Spleen (tissue), 13 donors: ENCODE measurements at regions of chr17 and their contacts with region 1.

Region 1: DNA sequence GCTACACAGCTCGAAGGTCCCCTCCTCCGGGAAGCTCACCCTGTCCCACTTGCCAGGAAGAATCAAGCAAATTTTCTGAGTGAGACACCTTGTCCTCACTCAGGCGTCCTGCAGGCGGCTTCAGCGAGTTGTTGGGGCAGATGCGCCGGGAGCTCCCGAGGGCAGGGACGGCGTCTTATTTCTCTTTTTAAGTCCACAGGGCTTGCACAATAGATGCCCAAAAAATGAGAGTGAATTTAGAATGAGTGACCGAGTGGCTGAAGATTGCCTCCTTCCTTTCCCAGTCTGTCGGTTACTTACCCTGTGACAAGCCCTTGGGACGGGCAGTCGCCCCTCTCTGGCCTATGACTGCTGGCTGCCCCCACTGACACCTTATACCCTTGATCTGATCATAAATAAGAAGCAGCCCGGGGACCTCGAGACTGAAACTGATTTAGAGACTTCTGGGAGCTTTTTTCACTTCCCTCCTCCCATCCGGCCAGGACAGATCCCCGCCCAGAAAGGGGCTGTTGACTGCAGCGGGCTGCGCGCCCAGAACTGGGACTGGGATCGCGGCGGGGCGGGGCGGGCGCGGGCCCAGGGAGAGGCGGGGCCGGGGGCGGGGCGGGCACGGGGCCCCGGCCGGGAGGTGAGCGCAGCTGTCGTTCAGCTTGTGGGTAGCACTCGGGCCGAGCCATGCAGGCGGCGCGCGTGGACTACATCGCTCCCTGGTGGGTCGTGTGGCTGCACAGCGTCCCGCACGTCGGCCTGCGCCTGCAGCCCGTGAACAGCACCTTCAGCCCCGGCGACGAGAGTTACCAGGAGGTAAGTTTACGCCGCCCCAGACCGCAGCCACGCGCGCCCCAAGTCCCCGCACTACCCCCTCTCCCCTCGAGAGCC is at the start of gene TTYH2:
- DNase-seq: peak; percentile 94
- H3K4me3 ChIP-seq: peak within 1 kb of the TSS; percentile 44 to 75 (median 56)
- H3K27ac ChIP-seq: peak within 1 kb of the TSS; percentile 63 to 86 (median 79)
- H3K4me1 ChIP-seq: peaks cover 27 to 92% (median 74%) of the 10 kb centered on the region in 6 donors
- H3K27me3 ChIP-seq: no peaks in the 10 kb centered on the region
- CTCF ChIP-seq: peak in 6 of 11 experiments; percentile 12 to 27 (median 22)
- POLR2A ChIP-seq: no peak
- total RNA-seq, gene TTYH2: 15.0 to 22.7 (median 21.0) TPM

Region 2: GRCh38 chr17:74274060-74274708 is 61.0 kb after region 1 on chr17 and contains the start of gene DNAI2:
- intact Hi-C with region 1: no loop called
- DNase-seq: peak; percentile 82
- H3K4me3 ChIP-seq: peak within 1 kb of the TSS in 2 of 8 donors; percentile 10 to 50
- H3K27ac ChIP-seq: no peak within 1 kb of the TSS
- H3K4me1 ChIP-seq: peaks cover 13 to 35% (median 19%) of the 10 kb centered on the region in 6 donors
- H3K27me3 ChIP-seq: peaks cover 0 to 50% (median 0%) of the 10 kb centered on the region in 7 donors
- CTCF ChIP-seq: no peak
- POLR2A ChIP-seq: no peak
- total RNA-seq, gene DNAI2: 0.23 to 0.67 (median 0.29) TPM in 3 of 7 donors, not detected in the others

Region 3: DNA sequence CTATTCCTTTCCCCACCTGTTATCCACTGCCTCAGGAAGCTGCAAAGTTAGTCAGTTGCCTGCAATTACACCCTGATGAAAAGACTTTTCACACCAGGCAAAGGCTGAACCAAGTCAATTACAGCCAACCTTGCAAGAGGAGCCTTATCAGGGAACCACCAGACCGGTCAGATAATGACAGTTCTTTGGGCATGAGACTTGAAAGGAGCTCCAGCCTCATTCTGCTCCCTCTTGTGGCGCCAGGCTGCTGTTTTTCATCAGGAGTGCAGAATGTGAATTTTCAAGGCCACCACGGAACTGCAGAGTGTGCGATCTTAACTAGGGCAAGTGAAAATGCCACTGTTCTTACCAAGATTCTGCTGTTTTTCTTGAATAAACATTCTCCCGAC is 83.4 kb after region 1 on chr17:
- intact Hi-C with region 1: loop called (anchors 5 kb)
- DNase-seq: no peak
- H3K4me3 ChIP-seq: no peak overlapping the region
- H3K27ac ChIP-seq: peak overlapping the region in 1 of 8 donors; percentile 40
- H3K4me1 ChIP-seq: peaks cover 5 to 30% (median 8%) of the 10 kb centered on the region in 6 donors
- H3K27me3 ChIP-seq: peaks cover 0 to 34% (median 0%) of the 10 kb centered on the region in 7 donors
- CTCF ChIP-seq: peak; percentile 32 to 74 (median 60)
- POLR2A ChIP-seq: no peak

Region 4: DNA sequence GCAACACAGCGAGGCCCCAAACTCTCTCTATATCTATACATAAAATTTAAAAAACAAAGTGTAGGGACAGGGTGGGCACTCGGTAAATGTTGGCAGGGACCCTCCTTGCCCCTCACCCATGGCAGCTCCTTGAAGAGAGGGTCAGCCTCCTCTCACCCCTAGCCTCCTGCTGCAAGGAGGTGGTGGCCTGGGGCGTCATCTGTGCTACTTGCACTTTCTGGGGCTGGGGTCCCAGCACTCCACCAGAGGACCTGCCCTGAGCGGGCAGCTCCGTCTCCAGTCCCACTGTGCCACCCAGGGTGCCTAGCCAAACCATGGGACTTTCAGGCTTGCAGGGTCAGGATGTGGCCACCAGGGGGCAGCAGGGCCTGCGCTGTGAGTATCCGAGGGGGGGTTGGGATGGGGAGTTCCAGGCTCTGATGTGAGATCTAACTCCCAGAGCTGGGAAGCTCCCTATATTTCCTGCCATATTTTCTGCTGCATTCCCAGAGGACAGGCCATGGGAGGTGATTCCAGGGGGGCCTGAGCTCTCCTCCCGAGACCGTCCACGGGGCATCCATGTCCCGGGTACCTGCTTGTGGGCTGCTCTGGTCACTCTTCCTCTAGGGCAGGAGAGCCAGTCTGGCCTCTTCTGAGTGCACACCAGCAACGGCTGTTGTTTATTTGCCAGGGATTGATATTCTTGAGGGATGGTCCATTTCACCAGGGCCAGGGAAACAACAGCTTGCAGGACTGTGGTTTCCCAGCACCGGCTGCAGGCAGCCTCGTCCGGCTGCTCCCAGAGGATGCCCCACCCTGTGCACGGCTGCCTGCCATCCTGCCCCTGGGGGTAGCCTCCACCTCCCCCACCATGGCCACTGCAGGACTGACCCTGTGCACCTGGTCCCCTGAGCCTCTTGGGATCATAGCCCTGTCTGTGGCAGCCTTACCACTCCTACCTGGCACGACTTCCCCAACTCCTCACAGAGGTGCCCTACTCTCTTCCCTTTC is 155.2 kb after region 1 on chr17:
- intact Hi-C with region 1: loop called (anchors 10 kb)
- DNase-seq: peak; percentile 91
- H3K4me3 ChIP-seq: peak overlapping the region in 2 of 8 donors; percentile 15 to 61
- H3K27ac ChIP-seq: peak overlapping the region in 1 of 8 donors; percentile 11
- H3K4me1 ChIP-seq: peaks cover 10 to 20% (median 16%) of the 10 kb centered on the region in 6 donors
- H3K27me3 ChIP-seq: peaks cover 0 to 50% (median 0%) of the 10 kb centered on the region in 7 donors
- CTCF ChIP-seq: peak; percentile 84 to 96 (median 93)
- POLR2A ChIP-seq: no peak

Region 5: GRCh38 chr17:74457146-74457819 is 244.1 kb after region 1 on chr17:
- intact Hi-C with region 1: loop called (anchors 10 kb)
- DNase-seq: peak; percentile 94
- H3K4me3 ChIP-seq: no peak overlapping the region
- H3K27ac ChIP-seq: peak overlapping the region in 1 of 8 donors; percentile 28
- H3K4me1 ChIP-seq: peaks cover 19 to 84% (median 55%) of the 10 kb centered on the region in 6 donors
- H3K27me3 ChIP-seq: peaks cover 0 to 24% (median 0%) of the 10 kb centered on the region in 7 donors
- CTCF ChIP-seq: peak; percentile 83 to 96 (median 93)
- POLR2A ChIP-seq: no peak